Posterior vena cava (tissue), 2 donors: ENCODE measurements at regions of chr7 and their contacts with region 1.

Region 1: GRCh38 chr7:103432712-103433111 is 13.3 kb downstream of the SLC26A5 start:
- DNase-seq: no peak

Region 2: GRCh38 chr7:103373866-103374643 is 58.7 kb before region 1 on chr7:
- intact Hi-C with region 1: no loop called
- DNase-seq: no peak

Region 3: DNA sequence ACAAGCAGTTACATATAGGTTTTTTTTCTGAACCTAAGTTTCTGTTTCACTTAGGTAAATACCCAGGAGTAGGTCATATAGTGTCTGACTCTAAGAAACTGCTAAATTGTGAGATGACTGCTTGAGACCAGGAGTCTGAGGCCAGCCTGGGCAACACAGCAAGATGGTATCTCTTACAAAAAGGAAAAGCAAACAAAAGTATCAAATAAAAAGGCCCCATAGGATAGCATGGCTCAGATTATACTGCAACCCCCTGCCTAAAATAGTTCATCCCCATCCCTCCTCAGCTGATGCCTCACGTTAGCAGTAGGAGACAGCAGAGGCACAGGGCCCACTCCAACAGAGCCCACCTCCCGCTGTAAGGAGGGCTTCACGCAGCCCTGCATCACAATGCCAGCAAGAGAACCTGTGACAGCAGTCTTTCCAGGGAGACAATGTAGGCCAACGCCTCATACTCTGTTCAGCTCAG is 1865.8 kb after region 1 on chr7:
- intact Hi-C with region 1: loop called in 1 of 2 experiments (anchors 10 kb)
- DNase-seq: no peak